H1 (cell line): ENCODE measurements at regions of chr16 and their contacts with region 1.

Region 1: GRCh38 chr16:29900102-29900887 is at the start of gene ASPHD1:
- DNase-seq: peak; percentile 25 to 89
- H3K4me3 ChIP-seq: peak within 1 kb of the TSS; percentile 59 to 99 (median 90)
- H3K27ac ChIP-seq: peak within 1 kb of the TSS; percentile 67
- H3K4me1 ChIP-seq: peaks cover 0 to 14% (median 3%) of the 10 kb centered on the region in 4 experiments; a peak in 6 of 7 replicates
- H3K27me3 ChIP-seq: no peaks in the 10 kb centered on the region
- CTCF ChIP-seq: no peak
- EP300 ChIP-seq: no peak
- POLR2A ChIP-seq: no peak
- RAD21 ChIP-seq: no peak
- total RNA-seq, gene ASPHD1: 17.8 and 18.6 TPM in 2 replicates

Region 2: DNA sequence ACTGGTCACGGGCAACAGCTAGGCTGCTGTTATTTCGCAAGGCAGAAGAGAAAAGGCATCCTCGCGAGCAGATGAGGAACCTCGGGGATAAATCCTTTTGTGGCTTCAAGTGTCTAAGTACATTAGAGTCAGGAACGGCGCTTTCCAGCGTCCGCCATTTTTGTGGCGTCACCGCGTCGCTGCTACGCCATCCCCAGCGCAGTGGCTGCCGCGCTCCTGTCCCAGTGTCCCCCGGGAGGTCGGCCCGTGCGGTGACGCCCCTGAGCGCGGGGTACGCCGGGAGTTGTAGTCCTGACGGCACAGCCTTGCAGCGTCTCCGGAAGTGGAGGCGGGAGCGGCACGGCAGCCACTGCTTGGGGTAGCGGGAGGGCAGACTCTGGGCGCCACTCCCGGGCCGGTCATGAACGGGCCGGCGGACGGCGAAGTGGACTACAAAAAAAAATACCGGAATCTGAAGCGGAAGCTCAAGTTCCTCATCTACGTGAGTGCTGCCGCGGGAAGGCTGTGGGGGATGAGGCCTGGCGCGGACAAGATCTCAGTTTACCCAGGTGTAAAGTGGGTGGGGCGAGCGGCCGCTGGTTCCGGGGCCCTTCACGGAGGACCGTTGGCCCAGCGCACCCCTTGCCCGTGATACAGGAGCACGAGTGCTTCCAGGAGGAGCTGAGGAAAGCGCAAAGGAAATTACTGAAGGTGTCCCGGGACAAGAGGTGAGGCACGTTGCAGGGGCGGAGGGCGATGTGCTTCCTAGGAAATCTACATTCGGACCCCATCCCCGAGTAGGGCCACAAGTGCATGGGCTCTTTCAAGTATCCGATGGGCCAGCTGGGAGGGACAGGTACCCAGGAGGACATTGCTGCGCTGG is 95.8 kb after region 1 on chr16 and contains the start of gene INO80E:
- CTCF ChIA-PET with region 1: interaction called, 6 read pairs
- POLR2A ChIA-PET with region 1: interaction called, 14 read pairs
- DNase-seq: peak; percentile 90 to 98
- H3K4me3 ChIP-seq: peak within 1 kb of the TSS; percentile 75 to 91 (median 80)
- H3K27ac ChIP-seq: peak within 1 kb of the TSS; percentile 86
- H3K4me1 ChIP-seq: peaks cover 0 to 10% (median 4%) of the 10 kb centered on the region in 4 experiments; a peak in 6 of 7 replicates
- H3K27me3 ChIP-seq: no peaks in the 10 kb centered on the region
- CTCF ChIP-seq: no peak
- EP300 ChIP-seq: no peak
- POLR2A ChIP-seq: no peak
- RAD21 ChIP-seq: no peak
- total RNA-seq, gene INO80E: 91.2 and 92.7 TPM in 2 replicates